Aorta (tissue), 5 donors: ENCODE measurements at regions of chr2 and their contacts with region 1.

Region 1: GRCh38 chr2:150624001-150624401 is 136.5 kb upstream of the RND3 start:
- DNase-seq: no peak
- ATAC-seq: no peak
- H3K4me3 ChIP-seq: no peak overlapping the region
- H3K27ac ChIP-seq: no peak overlapping the region
- H3K4me1 ChIP-seq: peaks cover 0 to 3% of the 10 kb centered on the region in 2 donors
- H3K27me3 ChIP-seq: no peaks in the 10 kb centered on the region

Region 2: GRCh38 chr2:150663143-150663542 is 39.1 kb after region 1 on chr2:
- intact Hi-C with region 1: loop called in 1 of 2 experiments (anchors 5 kb)
- DNase-seq: no peak
- ATAC-seq: no peak
- H3K4me3 ChIP-seq: no peak overlapping the region
- H3K27ac ChIP-seq: no peak overlapping the region
- H3K4me1 ChIP-seq: no peaks in the 10 kb centered on the region
- H3K27me3 ChIP-seq: no peaks in the 10 kb centered on the region